CD14-positive monocyte (primary cell): ENCODE measurements at regions of chr1 and their contacts with region 1.

Region 1: GRCh38 chr1:113042285-113043143 is 30.5 kb upstream of the LRIG2 start:
- DNase-seq: peak; percentile 88 to 92 (median 90)
- H3K4me3 ChIP-seq: peak overlapping the region in 1 of 3 experiments; percentile 49
- H3K4me3 Mint-ChIP-seq: peak overlapping the region in 1 of 2 donors; percentile 55
- H3K27ac ChIP-seq: peak overlapping the region; percentile 63 to 69
- H3K27ac Mint-ChIP-seq: peak overlapping the region; percentile 64 to 92 (median 83)
- H3K4me1 ChIP-seq: peaks cover 46 to 50% of the 10 kb centered on the region in 2 donors
- H3K4me1 Mint-ChIP-seq: peaks cover 45% of the 10 kb centered on the region
- H3K27me3 ChIP-seq: no peaks in the 10 kb centered on the region
- H3K27me3 Mint-ChIP-seq: peaks cover 2 to 6% (median 4%) of the 10 kb centered on the region in 3 donors
- CTCF ChIP-seq: peak; percentile 70

Region 2: DNA sequence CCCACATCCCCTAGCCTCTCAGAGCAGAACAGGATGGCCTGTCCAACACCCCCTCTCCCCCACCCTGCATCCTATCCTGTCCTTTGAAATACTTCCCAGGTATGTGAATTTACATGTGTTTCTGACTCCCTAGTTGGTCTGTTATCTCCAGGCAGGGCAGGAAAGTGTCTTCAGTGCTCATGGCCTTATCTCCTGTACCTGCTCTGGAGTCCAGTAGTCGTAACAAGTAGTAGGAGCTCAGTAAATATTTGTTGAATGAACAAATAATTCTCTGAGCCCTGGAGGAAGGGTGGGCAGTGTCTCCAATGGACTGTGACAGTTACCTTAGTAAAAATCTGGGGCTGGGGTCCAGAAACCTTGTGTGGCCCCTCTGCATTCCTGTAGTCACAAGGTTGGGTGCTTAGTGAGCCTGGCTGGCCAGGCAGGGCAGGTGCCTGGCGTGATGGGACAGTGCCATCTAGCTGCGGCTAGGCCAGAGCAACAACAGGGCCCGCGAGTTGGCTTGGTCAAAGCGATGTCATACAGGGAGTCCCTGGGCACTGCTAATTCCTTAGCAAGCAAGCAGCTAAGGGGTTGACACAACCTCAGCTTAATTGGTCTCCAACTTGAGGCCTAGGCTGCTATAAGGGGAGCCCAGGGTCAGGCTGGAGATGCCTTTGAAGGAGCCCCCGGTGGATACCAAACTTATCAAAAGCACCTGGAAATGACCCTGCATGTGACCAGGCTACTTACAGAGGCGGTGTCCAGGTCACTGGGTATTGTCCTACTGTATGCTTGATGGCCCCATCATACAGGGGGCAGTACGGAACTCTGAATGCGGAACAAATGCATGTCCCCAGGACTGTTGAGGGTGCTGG is 238.4 kb before region 1 on chr1:
- intact Hi-C with region 1: loop called in 1 of 2 experiments (anchors 10 kb)
- DNase-seq: peak; percentile 16 to 41 (median 23)
- H3K4me3 ChIP-seq: no peak overlapping the region
- H3K4me3 Mint-ChIP-seq: no peak overlapping the region
- H3K27ac ChIP-seq: no peak overlapping the region
- H3K27ac Mint-ChIP-seq: no peak overlapping the region
- H3K4me1 ChIP-seq: no peaks in the 10 kb centered on the region
- H3K4me1 Mint-ChIP-seq: peaks cover 2% of the 10 kb centered on the region
- H3K27me3 ChIP-seq: no peaks in the 10 kb centered on the region
- H3K27me3 Mint-ChIP-seq: peaks cover 5 to 18% (median 6%) of the 10 kb centered on the region in 3 donors
- CTCF ChIP-seq: peak; percentile 60

Region 3: GRCh38 chr1:112882271-112882744 is 160.2 kb before region 1 on chr1:
- intact Hi-C with region 1: loop called (anchors 2 to 10 kb)
- DNase-seq: peak; percentile 14 to 42 (median 16)
- H3K4me3 ChIP-seq: peak overlapping the region in 1 of 3 experiments; percentile 50
- H3K4me3 Mint-ChIP-seq: peak overlapping the region; percentile 56 to 85
- H3K27ac ChIP-seq: peak overlapping the region; percentile 80 to 81
- H3K27ac Mint-ChIP-seq: peak overlapping the region; percentile 92 to 96 (median 94)
- H3K4me1 ChIP-seq: peaks cover 29 to 30% of the 10 kb centered on the region in 2 donors
- H3K4me1 Mint-ChIP-seq: peaks cover 28% of the 10 kb centered on the region
- H3K27me3 ChIP-seq: no peaks in the 10 kb centered on the region
- H3K27me3 Mint-ChIP-seq: peaks cover 4 to 10% (median 7%) of the 10 kb centered on the region in 3 donors
- CTCF ChIP-seq: no peak

Region 4: DNA sequence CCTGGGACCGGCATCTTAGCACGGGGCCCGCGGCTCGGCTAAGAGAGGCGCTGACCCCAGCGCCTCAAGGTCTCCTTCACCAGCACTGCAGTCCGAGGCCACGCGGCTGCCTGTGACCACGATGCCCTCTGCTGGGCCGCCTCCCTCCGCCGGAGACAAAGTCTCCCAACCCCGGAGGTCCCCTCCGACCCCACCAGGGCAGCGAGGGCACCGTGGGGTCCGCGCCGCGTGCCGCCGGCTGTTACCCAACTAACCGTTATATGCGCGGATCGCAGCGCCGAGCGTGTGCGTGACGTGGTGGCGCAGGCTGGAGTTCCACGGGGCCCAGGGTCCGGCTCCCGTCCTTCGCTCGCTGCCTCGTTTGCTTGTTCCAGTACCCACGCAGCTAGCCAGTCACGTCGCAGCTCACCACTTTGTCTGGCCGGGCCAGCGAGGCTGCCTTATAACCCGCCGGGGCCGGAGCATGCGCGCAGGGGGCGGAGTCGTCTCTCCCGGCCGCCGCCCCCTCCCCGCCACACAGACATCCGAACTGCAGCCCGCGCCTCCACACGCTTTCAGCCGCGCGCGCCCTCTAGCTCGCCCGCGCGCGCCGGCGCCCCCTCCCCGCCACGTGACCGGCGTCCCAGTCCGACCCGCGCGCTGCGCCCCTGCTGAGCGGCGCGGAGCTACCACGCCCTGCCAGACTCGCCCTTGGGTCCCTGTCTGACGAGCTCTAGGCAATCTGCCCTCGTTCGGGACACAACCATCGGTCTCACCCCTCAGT is 86.6 kb before region 1 on chr1 and contains the start of gene SLC16A1:
- intact Hi-C with region 1: loop called in 1 of 2 experiments (anchors 10 kb)
- DNase-seq: peak; percentile 85 to 91 (median 86)
- H3K4me3 ChIP-seq: peak within 1 kb of the TSS; percentile 58 to 90 (median 85)
- H3K4me3 Mint-ChIP-seq: peak within 1 kb of the TSS; percentile 97 to 100
- H3K27ac ChIP-seq: peak within 1 kb of the TSS; percentile 90 to 91
- H3K27ac Mint-ChIP-seq: peak within 1 kb of the TSS; percentile 90 to 98 (median 96)
- H3K4me1 ChIP-seq: peaks cover 30 to 34% of the 10 kb centered on the region in 2 donors
- H3K4me1 Mint-ChIP-seq: peaks cover 54% of the 10 kb centered on the region
- H3K27me3 ChIP-seq: no peaks in the 10 kb centered on the region
- H3K27me3 Mint-ChIP-seq: peaks cover 0 to 2% (median 0%) of the 10 kb centered on the region in 3 donors
- CTCF ChIP-seq: peak; percentile 29
- polyA plus RNA-seq, gene SLC16A1: 2.4 to 13.1 (median 10.3) TPM